Naive thymus-derived CD8-positive, alpha-beta T cell (primary cell): ENCODE measurements at regions of chr14 and their contacts with region 1.

Region 1: DNA sequence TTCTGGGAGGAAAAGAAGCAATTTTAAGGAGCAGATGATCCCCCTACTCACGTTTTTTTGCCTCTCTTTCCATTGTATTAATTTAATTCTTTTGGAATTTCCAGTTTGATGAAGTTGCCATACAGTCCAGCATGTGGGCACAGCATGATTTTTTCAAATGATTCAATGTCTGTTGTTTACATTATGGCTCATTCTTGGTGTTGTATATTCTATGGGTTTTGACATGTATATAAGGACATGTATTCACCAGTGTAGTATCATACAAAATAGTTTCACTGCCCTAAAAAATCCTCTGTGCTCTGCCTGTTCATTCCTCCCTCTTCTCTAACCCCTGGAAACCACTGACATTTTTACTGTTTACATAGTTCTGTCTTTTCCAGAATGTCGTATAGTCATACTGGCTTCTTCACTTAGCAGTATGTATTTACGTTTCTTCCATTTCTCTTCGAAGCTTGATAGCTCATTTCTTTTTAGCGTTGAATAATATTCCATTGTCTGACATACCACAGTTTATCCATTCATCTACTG is 13.3 kb upstream of the KLHDC2 start:
- DNase-seq: no peak
- ATAC-seq: no peak
- H3K4me3 Mint-ChIP-seq: no peak overlapping the region
- H3K27ac Mint-ChIP-seq: peak overlapping the region in 1 of 10 donors; percentile 24
- H3K4me1 Mint-ChIP-seq: peaks cover 0 to 1% (median 0%) of the 10 kb centered on the region in 4 donors
- H3K27me3 Mint-ChIP-seq: no peaks in the 10 kb centered on the region

Region 2: DNA sequence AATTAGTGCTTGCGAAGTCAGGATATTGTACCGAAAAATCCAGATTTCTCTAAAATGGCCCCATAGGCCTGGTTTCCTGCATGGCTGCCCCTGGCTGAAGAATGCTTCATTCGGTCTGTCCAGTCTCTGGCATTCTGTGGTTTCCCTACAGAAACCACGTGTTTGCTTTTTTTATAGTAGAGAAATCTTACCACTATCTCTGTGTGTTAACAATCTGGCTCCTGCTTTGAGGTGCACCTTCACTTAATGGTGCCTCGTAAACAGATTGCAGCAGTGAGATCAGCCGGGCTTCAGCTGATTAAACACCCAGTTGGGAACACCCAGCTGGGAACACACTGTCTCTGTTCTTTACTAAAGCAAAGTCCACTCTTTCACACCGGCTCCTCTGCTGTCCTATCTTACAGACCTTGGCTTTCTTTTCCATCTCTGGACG is 112.9 kb before region 1 on chr14:
- POLR2A ChIA-PET with region 1: no interaction called
- DNase-seq: no peak
- ATAC-seq: no peak
- H3K4me3 Mint-ChIP-seq: no peak overlapping the region
- H3K27ac Mint-ChIP-seq: peak overlapping the region in 9 of 10 donors; percentile 1 to 90 (median 57)
- H3K4me1 Mint-ChIP-seq: peaks cover 26 to 53% (median 52%) of the 10 kb centered on the region in 4 donors
- H3K27me3 Mint-ChIP-seq: no peaks in the 10 kb centered on the region

Region 3: DNA sequence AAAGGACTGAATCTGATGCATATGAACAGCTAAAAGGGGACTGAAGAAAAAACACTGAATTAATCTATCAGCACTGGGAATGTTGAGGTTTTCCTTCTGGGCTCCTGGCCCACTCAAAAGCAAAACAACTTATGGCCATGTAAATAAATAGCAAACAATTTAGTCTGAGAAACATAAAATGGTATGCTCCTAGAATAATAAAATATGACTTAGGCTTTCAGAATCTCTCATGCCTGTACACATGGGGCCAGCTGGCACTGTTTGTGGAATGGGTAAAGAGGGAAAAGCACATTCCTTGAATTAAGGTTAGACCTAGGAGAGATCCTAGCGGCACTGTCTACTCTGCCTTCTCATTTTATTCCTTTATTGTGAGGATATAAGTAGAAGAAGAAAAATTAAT is 19.5 kb after region 1 on chr14:
- POLR2A ChIA-PET with region 1: interaction called, 11 read pairs
- DNase-seq: no peak
- ATAC-seq: no peak
- H3K4me3 Mint-ChIP-seq: no peak overlapping the region
- H3K27ac Mint-ChIP-seq: peak overlapping the region in 6 of 10 donors; percentile 23 to 58 (median 46)
- H3K4me1 Mint-ChIP-seq: peaks cover 13 to 41% (median 31%) of the 10 kb centered on the region in 4 donors
- H3K27me3 Mint-ChIP-seq: no peaks in the 10 kb centered on the region